MCF 10A (cell line): ENCODE measurements at regions of chr11 and their contacts with region 1.

Region 1: DNA sequence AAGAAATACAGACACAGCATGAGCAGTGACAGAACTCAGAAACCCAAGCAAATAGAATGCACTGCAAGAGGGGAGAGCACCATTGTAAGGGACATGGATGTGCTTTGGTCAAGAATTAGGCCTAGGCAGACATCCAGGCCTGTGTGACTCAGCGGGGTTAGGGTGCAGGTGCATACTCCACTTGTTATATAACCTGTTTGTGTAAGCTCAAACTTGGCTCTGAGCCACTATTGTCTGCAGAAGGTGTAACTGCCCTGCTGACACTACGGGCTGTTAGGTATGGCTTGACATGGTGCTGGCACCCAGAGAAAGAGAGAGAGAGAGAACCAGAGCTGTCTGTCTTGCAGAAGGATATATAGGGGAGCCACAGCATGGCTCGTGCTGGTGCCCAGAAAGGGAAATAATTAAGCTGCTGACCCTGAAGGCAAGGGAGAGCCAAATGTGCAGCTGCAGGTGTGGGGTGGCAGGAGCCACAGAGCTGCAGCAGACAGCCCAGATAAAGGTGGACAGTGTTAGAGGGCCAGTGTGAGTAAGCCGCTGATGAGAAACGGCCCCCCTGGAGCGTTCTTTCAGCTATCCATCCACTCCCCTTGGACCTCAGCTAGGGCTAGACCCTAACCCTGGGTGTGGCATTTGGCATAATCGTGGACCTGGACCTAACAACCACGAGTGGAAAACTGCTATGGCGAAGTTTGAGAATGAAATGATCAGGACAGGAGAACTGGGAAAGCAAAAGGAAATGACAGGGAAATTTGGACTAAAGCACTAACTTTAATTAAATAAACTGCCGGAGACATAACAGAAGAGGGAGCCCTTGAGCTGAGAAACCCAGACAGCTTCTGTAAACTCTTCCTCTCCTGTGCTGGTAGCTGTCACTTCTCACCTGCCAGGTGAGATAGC is 253.0 kb upstream of the CCDC179 start:
- DNase-seq: peak; percentile 44
- H3K4me3 Mint-ChIP-seq: no peak overlapping the region
- H3K27ac Mint-ChIP-seq: no peak overlapping the region
- H3K4me1 Mint-ChIP-seq: peaks cover 8% of the 10 kb centered on the region
- H3K27me3 Mint-ChIP-seq: peaks cover 28% of the 10 kb centered on the region
- CTCF ChIP-seq: peak; percentile 49

Region 2: DNA sequence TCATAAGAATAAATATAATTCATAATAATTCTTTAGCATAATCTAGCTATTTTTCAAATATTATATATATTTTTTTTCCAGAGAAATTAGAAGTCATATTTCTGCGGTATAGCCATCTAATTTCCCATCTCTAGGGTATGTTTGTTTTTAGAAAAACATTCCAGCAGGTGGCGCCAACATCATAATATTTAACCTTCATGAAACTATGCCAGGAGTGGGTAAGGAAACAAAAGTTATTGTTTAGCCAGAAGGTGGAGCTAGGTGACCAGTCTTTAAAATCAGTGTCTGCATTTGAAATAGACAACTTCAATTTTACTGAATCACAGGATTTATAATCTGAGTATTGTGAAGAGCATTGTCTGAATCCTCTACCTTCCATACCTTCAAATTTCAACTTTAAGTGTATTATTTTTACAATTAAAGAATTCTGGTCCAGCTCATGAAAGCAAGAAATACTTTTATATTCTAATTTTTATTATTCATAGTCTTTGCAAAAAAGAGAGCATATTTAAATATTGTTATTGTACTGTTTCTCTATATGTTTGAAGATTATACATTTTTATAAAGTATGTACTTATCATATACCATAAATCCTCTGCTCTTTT is 237.3 kb before region 1 on chr11:
- CTCF ChIA-PET with region 1: interaction called, 16 read pairs
- POLR2A ChIA-PET with region 1: no interaction called
- intact Hi-C with region 1: no loop called
- DNase-seq: peak; percentile 90
- H3K4me3 Mint-ChIP-seq: no peak overlapping the region
- H3K27ac Mint-ChIP-seq: no peak overlapping the region
- H3K4me1 Mint-ChIP-seq: no peaks in the 10 kb centered on the region
- H3K27me3 Mint-ChIP-seq: peaks cover 45% of the 10 kb centered on the region
- CTCF ChIP-seq: peak; percentile 65

Region 3: DNA sequence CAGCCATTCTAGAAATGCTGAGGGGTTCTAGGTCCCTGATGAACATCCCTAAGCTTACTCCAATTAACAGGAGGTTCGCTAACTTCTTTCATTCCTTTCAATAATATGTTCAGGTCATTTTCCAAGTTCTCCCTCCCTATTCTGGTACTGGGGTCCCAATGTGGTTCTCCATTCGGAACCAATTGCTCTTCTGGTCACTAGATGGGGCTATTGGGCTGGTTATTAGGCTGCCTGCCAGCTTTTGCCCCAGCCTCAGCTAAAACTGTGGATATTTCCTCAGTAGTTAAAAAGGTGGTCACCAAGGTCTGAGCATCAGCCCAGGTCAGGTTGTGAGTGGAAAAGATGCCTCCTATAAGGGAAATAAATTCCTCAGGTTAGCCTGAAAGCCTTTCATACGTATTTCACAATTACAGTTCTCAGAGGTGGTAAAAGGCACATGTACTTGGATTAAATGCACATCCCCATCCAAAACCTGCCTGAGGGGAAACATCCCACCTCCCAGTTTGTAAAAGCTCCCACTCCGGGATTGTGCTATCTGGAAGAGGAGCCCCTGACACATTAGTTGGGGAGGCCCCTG is 91.9 kb before region 1 on chr11:
- CTCF ChIA-PET with region 1: interaction called, 13 read pairs
- POLR2A ChIA-PET with region 1: no interaction called
- intact Hi-C with region 1: no loop called
- DNase-seq: peak; percentile 9
- H3K4me3 Mint-ChIP-seq: no peak overlapping the region
- H3K27ac Mint-ChIP-seq: no peak overlapping the region
- H3K4me1 Mint-ChIP-seq: no peaks in the 10 kb centered on the region
- H3K27me3 Mint-ChIP-seq: no peaks in the 10 kb centered on the region
- CTCF ChIP-seq: peak; percentile 45

Region 4: GRCh38 chr11:23095650-23096189 is 17.5 kb before region 1 on chr11:
- CTCF ChIA-PET with region 1: interaction called, 10 read pairs
- POLR2A ChIA-PET with region 1: interaction called, 3 read pairs
- intact Hi-C with region 1: no loop called
- DNase-seq: no peak
- H3K4me3 Mint-ChIP-seq: no peak overlapping the region
- H3K27ac Mint-ChIP-seq: no peak overlapping the region
- H3K4me1 Mint-ChIP-seq: no peaks in the 10 kb centered on the region
- H3K27me3 Mint-ChIP-seq: peaks cover 12% of the 10 kb centered on the region
- CTCF ChIP-seq: no peak

Region 5: GRCh38 chr11:23123753-23124152 is 10.5 kb after region 1 on chr11:
- CTCF ChIA-PET with region 1: interaction called, 19 read pairs
- POLR2A ChIA-PET with region 1: interaction called, 4 read pairs
- intact Hi-C with region 1: no loop called
- DNase-seq: no peak
- H3K4me3 Mint-ChIP-seq: no peak overlapping the region
- H3K27ac Mint-ChIP-seq: no peak overlapping the region
- H3K4me1 Mint-ChIP-seq: no peaks in the 10 kb centered on the region
- H3K27me3 Mint-ChIP-seq: no peaks in the 10 kb centered on the region
- CTCF ChIP-seq: no peak

Region 6: DNA sequence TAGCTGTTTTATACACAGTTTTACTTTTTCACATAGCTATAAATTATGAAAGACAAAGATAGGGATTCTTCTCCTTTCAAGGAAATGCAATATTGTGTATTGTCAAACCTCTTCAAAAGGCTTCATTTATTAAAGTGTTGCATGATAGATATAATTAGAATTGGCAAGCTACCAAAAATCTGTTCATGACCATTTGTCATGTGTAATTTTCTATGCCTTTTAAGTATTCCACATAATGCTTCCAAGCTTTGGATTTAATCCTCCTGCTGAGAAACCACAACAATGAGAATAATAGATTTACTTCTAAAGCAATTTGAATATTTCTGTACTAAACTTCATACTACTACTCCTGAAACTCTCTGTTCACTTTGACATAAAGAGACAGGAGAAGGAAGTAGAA is 150.2 kb after region 1 on chr11:
- CTCF ChIA-PET with region 1: no interaction called
- POLR2A ChIA-PET with region 1: no interaction called
- intact Hi-C with region 1: no loop called
- DNase-seq: no peak
- H3K4me3 Mint-ChIP-seq: no peak overlapping the region
- H3K27ac Mint-ChIP-seq: no peak overlapping the region
- H3K4me1 Mint-ChIP-seq: no peaks in the 10 kb centered on the region
- H3K27me3 Mint-ChIP-seq: no peaks in the 10 kb centered on the region
- CTCF ChIP-seq: no peak